Keratinocyte (primary cell): ENCODE measurements at regions of chr1 and their contacts with region 1.

Region 1: GRCh38 chr1:25895365-25895993 is 10.7 kb downstream of the STMN1 start:
- DNase-seq: no peak
- H3K4me3 ChIP-seq: no peak overlapping the region
- H3K27ac ChIP-seq: no peak overlapping the region
- H3K4me1 ChIP-seq: peaks cover 36% of the 10 kb centered on the region
- H3K27me3 ChIP-seq: no peaks in the 10 kb centered on the region
- CTCF ChIP-seq: peak; percentile 96 to 99 (median 97)

Region 2: DNA sequence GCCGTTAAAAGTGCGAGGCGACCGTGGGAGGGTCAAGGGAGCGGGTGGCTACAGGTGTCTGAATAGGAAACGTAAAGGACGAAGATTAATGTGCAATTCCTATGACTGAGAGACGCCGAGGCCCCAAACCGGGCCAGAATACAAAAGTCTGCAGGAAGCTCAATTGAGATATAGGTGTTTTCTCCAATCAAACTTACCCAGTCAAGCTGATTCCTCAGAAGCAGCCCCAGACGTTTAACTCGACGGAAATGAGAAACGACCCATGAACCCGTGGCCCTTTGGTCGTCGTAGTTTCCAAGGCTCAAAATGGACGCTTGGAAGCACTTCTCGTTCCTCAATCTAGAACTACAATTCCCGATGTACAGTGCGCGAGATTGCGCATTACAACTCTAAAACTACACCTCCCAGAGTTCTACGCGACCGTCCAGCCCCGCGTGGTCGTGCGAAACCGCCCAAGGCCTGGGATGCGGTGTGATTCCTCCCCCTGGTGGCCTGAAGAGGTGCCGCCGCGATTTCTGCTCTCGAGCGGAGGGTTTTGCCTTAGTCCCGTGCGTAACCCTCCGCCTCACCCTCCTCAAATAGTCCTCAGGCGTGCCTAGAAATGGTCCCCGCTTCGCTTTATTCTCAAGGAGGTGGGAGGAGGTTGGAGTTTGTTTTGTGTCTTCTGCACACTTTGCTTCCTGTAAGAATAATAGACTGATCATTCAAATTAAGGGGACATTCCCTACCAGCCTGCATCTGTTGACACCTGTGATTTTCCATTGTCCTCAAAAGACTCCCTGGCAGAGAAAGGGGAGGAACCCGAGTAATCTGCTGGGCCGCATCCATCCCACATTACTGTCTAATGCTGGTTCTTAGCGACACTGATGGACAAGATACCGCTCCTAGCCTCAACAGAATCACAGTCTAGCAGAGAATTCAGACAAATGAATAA is 102.6 kb after region 1 on chr1 and contains the start of gene PAFAH2:
- dilution Hi-C with region 1: loop called (anchors 25 kb)
- DNase-seq: peak; percentile 93
- H3K4me3 ChIP-seq: peak within 1 kb of the TSS; percentile 65 to 92 (median 90)
- H3K27ac ChIP-seq: peak within 1 kb of the TSS; percentile 75
- H3K4me1 ChIP-seq: peaks cover 15% of the 10 kb centered on the region
- H3K27me3 ChIP-seq: no peaks in the 10 kb centered on the region
- CTCF ChIP-seq: peak; percentile 97 to 100 (median 99)
- polyA plus RNA-seq, gene PAFAH2: 15.5 to 17.8 TPM (median 15.9 TPM) in 3 replicates